Esophagus muscularis mucosa (tissue), 4 donors: ENCODE measurements at regions of chr12 and their contacts with region 1.

Region 1: GRCh38 chr12:8681041-8681902 is 16.5 kb upstream of the RIMKLB start:
- DNase-seq: no peak
- H3K4me3 ChIP-seq: peak overlapping the region in 1 of 4 donors; percentile 4
- H3K27ac ChIP-seq: peak overlapping the region in 2 of 4 donors; percentile 31 to 46
- H3K4me1 ChIP-seq: peaks cover 0 to 6% (median 1%) of the 10 kb centered on the region in 4 donors
- H3K27me3 ChIP-seq: no peaks in the 10 kb centered on the region
- CTCF ChIP-seq: no peak
- EP300 ChIP-seq: no peak
- POLR2A ChIP-seq: no peak

Region 2: GRCh38 chr12:8541562-8541961 is 139.7 kb before region 1 on chr12:
- intact Hi-C with region 1: no loop called
- DNase-seq: no peak
- H3K4me3 ChIP-seq: no peak overlapping the region
- H3K27ac ChIP-seq: no peak overlapping the region
- H3K4me1 ChIP-seq: no peaks in the 10 kb centered on the region
- H3K27me3 ChIP-seq: peaks cover 0 to 7% (median 0%) of the 10 kb centered on the region in 4 donors
- CTCF ChIP-seq: no peak
- EP300 ChIP-seq: no peak
- POLR2A ChIP-seq: no peak

Region 3: DNA sequence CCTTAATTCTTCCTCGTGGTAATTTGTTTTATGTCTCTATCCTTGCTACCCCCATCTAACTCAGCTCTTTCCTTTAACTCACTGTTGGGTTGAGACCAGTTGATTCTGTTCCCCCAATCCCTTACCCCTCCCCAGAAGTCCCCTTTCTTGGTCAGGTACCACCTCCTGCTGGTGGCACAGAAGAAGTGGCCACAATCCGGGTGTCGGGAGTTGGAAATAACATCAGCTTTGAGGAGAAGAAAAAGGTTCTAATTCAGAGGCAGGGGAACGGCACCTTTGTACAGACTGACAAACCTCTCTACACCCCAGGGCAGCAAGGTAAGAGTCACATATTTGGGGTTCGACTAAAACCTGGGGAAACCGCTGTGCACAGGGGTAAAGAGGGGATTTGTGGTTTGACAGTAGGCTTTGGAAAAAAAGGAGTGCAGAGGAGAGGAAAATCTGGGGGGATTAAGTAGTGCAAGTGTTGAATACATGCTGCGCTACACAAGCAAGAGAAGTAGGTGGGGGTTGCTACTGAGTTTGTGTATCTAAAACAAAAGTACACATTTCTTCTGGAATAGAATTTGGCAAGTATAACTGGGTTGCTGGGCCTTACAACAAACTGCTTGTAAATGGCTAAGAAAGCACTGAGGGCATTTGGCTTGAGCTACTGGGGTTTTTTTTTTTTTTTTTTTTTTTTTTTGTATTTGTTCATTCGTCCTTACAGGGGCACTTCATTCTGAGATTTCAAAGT is 142.5 kb after region 1 on chr12:
- intact Hi-C with region 1: loop called (anchors 2 kb)
- DNase-seq: no peak
- H3K4me3 ChIP-seq: no peak overlapping the region
- H3K27ac ChIP-seq: no peak overlapping the region
- H3K4me1 ChIP-seq: peaks cover 0 to 10% (median 4%) of the 10 kb centered on the region in 4 donors
- H3K27me3 ChIP-seq: no peaks in the 10 kb centered on the region
- CTCF ChIP-seq: peak; percentile 63 to 74 (median 70)
- EP300 ChIP-seq: no peak
- POLR2A ChIP-seq: no peak

Region 4: GRCh38 chr12:8890313-8891085 is 209.2 kb after region 1 on chr12:
- intact Hi-C with region 1: loop called (anchors 5 kb)
- DNase-seq: peak; percentile 92
- H3K4me3 ChIP-seq: peak overlapping the region; percentile 43 to 63 (median 55)
- H3K27ac ChIP-seq: peak overlapping the region in 2 of 4 donors; percentile 26 to 50
- H3K4me1 ChIP-seq: peaks cover 0 to 3% (median 0%) of the 10 kb centered on the region in 4 donors
- H3K27me3 ChIP-seq: no peaks in the 10 kb centered on the region
- CTCF ChIP-seq: peak; percentile 83 to 93 (median 88)
- EP300 ChIP-seq: no peak
- POLR2A ChIP-seq: no peak